ENCODE measurements at regions of chr1 and their contacts with region 1.

Region 1: DNA sequence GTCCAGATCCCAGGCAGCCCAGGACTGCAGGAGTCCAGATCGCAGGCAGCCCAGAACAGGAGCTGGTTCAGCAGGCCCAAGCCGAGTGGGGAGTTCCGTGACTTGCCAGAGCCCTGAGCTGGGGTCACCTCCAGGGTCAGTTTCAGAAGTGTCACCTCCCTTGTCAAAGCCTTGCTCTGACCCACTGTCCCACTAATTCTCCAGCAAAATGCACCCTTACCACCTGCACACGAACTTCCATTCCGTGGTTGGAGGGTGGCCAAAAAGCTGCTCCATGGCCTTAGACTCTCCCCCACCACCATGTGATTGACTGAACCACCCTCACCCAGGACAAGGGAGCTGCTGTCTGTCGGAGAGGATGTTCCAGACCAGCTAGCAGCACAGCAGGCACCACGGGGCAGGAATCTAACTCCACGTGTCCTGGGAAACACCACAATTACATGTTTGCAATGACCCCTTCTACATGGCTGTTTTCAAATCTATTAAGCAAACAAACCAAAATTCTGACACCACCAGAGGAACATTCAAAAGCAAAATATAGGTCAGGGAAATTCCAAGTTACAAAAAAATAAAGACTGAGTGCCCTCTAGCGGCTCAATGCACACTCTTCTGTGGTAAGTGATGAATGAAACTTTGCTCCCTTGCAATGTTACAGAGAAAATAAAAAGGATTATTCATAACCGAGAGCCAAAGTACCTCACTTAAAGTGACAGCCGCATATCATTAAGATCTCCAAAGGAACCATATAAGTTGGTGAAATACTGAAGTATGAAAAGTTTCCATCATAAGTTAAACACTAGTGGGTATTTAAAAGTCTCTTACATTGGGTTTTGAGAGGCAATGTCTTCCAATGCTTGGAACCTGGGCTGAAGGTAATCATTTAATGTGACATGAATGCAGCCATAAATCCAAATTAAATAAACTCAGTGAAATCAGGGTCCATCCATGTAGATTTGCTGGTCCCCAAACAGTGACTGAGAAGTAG is 76.3 kb downstream of the NPHP4 start:
- DNase-seq: no peak
- H3K4me3 ChIP-seq: no peak overlapping the region
- H3K27me3 ChIP-seq: no peaks in the 10 kb centered on the region
- CTCF ChIP-seq: peak; percentile 72

Region 2: DNA sequence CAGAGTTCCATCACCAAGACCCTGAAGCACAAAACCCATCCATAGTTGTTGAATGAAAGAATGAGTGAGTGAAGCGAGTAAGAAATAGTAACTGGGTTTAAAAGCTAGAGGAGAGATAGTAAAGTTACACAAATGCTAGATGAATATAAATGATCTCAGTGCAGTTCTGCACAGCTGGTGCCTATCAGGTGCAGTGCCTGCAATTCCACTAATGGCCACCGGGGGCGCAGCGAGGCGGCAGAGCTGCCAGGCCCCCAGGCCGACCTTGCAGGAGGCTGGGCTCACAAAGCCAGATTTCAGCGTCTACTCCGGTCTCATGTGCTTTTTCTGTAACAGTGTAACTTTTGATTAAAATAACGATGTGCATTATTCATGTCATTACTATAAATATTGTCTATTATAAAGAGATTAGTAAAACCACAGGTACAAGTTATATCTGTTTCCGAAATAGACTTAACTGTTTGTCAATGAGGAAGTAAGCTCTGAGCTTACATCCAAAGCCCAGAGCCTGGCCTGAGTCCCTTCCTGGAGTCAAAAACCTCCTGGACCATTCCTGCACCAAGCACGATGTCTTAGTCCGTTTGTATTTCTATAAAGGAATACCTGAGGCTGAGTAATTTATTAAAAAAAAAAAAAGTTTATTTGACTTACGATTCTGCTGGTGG is 401.2 kb before region 1 on chr1:
- CTCF ChIA-PET with region 1: interaction called, 36 read pairs
- POLR2A ChIA-PET with region 1: no interaction called
- DNase-seq: no peak
- H3K4me3 ChIP-seq: no peak overlapping the region
- H3K27me3 ChIP-seq: no peaks in the 10 kb centered on the region
- CTCF ChIP-seq: peak; percentile 98

Region 3: GRCh38 chr1:5896706-5897665 is 18.9 kb before region 1 on chr1:
- CTCF ChIA-PET with region 1: interaction called, 14 read pairs
- POLR2A ChIA-PET with region 1: no interaction called
- DNase-seq: no peak
- H3K4me3 ChIP-seq: no peak overlapping the region
- H3K27me3 ChIP-seq: no peaks in the 10 kb centered on the region
- CTCF ChIP-seq: no peak

Region 4: GRCh38 chr1:5927506-5928370 is 11.9 kb after region 1 on chr1:
- CTCF ChIA-PET with region 1: interaction called, 13 read pairs
- POLR2A ChIA-PET with region 1: no interaction called
- DNase-seq: no peak
- H3K4me3 ChIP-seq: no peak overlapping the region
- H3K27me3 ChIP-seq: no peaks in the 10 kb centered on the region
- CTCF ChIP-seq: no peak

Region 5: DNA sequence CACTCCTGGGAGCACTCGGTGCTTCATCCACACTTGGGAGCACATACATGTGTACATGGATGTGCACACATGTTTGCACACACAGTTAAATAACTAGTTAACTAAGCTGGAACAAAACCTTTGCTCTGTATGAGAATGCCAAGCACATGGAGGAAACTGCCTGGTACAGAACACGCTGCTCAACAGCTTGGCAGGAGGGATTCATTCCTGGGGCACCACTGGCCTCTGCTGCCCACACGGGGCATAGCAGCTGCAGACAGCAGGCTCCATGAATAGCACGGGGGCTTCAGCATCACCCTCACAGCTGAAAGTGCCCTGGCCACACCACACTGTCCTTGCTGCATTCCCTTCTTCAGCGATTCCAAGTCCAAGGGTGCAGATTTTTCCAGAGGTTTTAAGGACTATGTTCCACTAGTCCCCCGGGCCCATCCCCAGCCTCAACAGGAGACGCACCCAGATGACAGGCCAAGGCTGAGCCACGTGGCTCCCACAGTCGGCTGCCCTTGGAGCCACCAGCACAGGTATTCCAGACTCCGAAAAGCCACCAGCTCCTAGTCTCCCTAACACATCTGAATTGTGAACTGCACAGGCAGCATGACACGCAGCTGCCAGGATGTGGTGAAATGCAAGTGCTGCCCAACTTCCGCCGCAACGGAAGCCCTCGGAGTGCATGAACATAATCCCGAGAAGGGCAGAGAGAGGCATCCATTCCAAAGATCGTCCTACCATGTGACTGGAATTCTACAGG is 59.4 kb after region 1 on chr1:
- CTCF ChIA-PET with region 1: interaction called, 18 read pairs
- POLR2A ChIA-PET with region 1: no interaction called
- DNase-seq: no peak
- H3K4me3 ChIP-seq: no peak overlapping the region
- H3K27me3 ChIP-seq: no peaks in the 10 kb centered on the region
- CTCF ChIP-seq: peak; percentile 89

Measured in BJ (cell line).